Heart left ventricle (tissue), 16 donors: ENCODE measurements at regions of chr12 and their contacts with region 1.

Region 1: GRCh38 chr12:113030875-113031525 is 25.5 kb upstream of the DTX1 start:
- DNase-seq: no peak
- ATAC-seq: peak in 3 of 4 donors; percentile 55 to 74 (median 61)
- H3K4me3 ChIP-seq: no peak overlapping the region
- H3K27ac ChIP-seq: no peak overlapping the region
- H3K4me1 ChIP-seq: no peaks in the 10 kb centered on the region
- H3K27me3 ChIP-seq: peaks cover 0 to 9% (median 0%) of the 10 kb centered on the region in 9 donors
- CTCF ChIP-seq: peak; percentile 48 to 75 (median 67)
- POLR2A ChIP-seq: no peak

Region 2: GRCh38 chr12:112992541-112993398 is 38.2 kb before region 1 on chr12:
- intact Hi-C with region 1: loop called in 4 of 10 experiments (anchors 1 to 5 kb)
- DNase-seq: peak in 2 of 5 donors; percentile 50 to 54
- ATAC-seq: peak in 3 of 4 donors; percentile 58 to 70 (median 59)
- H3K4me3 ChIP-seq: no peak overlapping the region
- H3K27ac ChIP-seq: no peak overlapping the region
- H3K4me1 ChIP-seq: peaks cover 0 to 6% (median 0%) of the 10 kb centered on the region in 12 donors
- H3K27me3 ChIP-seq: no peaks in the 10 kb centered on the region
- CTCF ChIP-seq: peak; percentile 63 to 89 (median 82)
- POLR2A ChIP-seq: no peak

Region 3: DNA sequence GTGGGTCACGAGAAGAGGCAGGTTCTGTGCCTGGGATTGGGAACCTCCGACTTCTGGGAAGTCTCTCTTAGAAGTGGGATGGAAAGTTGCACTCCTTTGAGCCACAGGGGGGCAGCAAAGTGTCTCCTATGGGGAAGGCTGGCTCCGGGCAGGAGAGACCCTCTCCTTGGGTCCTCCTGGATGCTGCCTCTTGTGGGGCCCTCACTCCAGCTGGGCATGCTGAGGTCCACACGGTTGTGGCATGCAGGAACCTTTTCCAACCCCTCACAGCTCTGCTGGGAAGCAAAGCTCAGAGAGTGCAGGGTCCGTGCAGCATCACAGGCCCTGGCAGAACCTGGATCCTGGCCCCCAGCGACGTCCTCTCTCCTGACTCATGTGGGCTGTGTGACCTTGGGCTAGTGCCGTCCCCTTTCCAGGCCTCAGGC is 408.6 kb after region 1 on chr12:
- intact Hi-C with region 1: loop called in 1 of 10 experiments (anchors 10 kb)
- DNase-seq: no peak
- ATAC-seq: peak in 3 of 4 donors; percentile 34 to 59 (median 38)
- H3K4me3 ChIP-seq: no peak overlapping the region
- H3K27ac ChIP-seq: no peak overlapping the region
- H3K4me1 ChIP-seq: no peaks in the 10 kb centered on the region
- H3K27me3 ChIP-seq: peaks cover 0 to 42% (median 4%) of the 10 kb centered on the region in 9 donors
- CTCF ChIP-seq: peak; percentile 41 to 66 (median 58)
- POLR2A ChIP-seq: no peak